ENCODE measurements at regions of chr4 and their contacts with region 1.

Region 1: GRCh38 chr4:143558823-143559756 is 45.6 kb downstream of the SMARCA5 start:
- DNase-seq: peak; percentile 81
- ATAC-seq: peak; percentile 85
- H3K4me3 ChIP-seq: peak overlapping the region; percentile 57 to 75 (median 65)
- H3K4me3 Mint-ChIP-seq: peak overlapping the region; percentile 89
- H3K27ac ChIP-seq: peak overlapping the region; percentile 65 to 75
- H3K27ac Mint-ChIP-seq: peak overlapping the region; percentile 88
- H3K4me1 ChIP-seq: peaks cover 7 to 20% of the 10 kb centered on the region in 2 donors
- H3K4me1 Mint-ChIP-seq: peaks cover 26% of the 10 kb centered on the region
- H3K27me3 ChIP-seq: no peaks in the 10 kb centered on the region
- H3K27me3 Mint-ChIP-seq: no peaks in the 10 kb centered on the region
- CTCF ChIP-seq: peak; percentile 65

Region 2: GRCh38 chr4:143195581-143195980 is 363.5 kb before region 1 on chr4:
- CTCF ChIA-PET with region 1: no interaction called
- POLR2A ChIA-PET with region 1: no interaction called
- intact Hi-C with region 1: no loop called
- DNase-seq: no peak
- ATAC-seq: no peak
- H3K4me3 ChIP-seq: no peak overlapping the region
- H3K4me3 Mint-ChIP-seq: no peak overlapping the region
- H3K27ac ChIP-seq: no peak overlapping the region
- H3K27ac Mint-ChIP-seq: no peak overlapping the region
- H3K4me1 ChIP-seq: no peaks in the 10 kb centered on the region
- H3K4me1 Mint-ChIP-seq: peaks cover 10% of the 10 kb centered on the region
- H3K27me3 ChIP-seq: no peaks in the 10 kb centered on the region
- H3K27me3 Mint-ChIP-seq: no peaks in the 10 kb centered on the region
- CTCF ChIP-seq: no peak

Region 3: GRCh38 chr4:143513306-143514168 is 45.6 kb before region 1 on chr4 and contains the start of gene SMARCA5:
- CTCF ChIA-PET with region 1: interaction called, 10 read pairs
- POLR2A ChIA-PET with region 1: interaction called, 3 read pairs
- intact Hi-C with region 1: loop called (anchors 1 kb)
- DNase-seq: peak; percentile 99
- ATAC-seq: peak; percentile 88
- H3K4me3 ChIP-seq: peak within 1 kb of the TSS; percentile 81 to 97 (median 93)
- H3K4me3 Mint-ChIP-seq: peak within 1 kb of the TSS; percentile 100
- H3K27ac ChIP-seq: peak within 1 kb of the TSS; percentile 94 to 99
- H3K27ac Mint-ChIP-seq: peak within 1 kb of the TSS; percentile 100
- H3K4me1 ChIP-seq: peaks cover 28 to 29% of the 10 kb centered on the region in 2 donors
- H3K4me1 Mint-ChIP-seq: peaks cover 39% of the 10 kb centered on the region
- H3K27me3 ChIP-seq: no peaks in the 10 kb centered on the region
- H3K27me3 Mint-ChIP-seq: peaks cover 8% of the 10 kb centered on the region
- CTCF ChIP-seq: no peak
- total RNA-seq, gene SMARCA5: 48.7 and 53.1 TPM in 2 replicates

Region 4: GRCh38 chr4:143575331-143575730 is 16.2 kb after region 1 on chr4:
- CTCF ChIA-PET with region 1: interaction called, 11 read pairs
- POLR2A ChIA-PET with region 1: no interaction called
- intact Hi-C with region 1: no loop called
- DNase-seq: no peak
- ATAC-seq: no peak
- H3K4me3 ChIP-seq: no peak overlapping the region
- H3K4me3 Mint-ChIP-seq: no peak overlapping the region
- H3K27ac ChIP-seq: no peak overlapping the region
- H3K27ac Mint-ChIP-seq: no peak overlapping the region
- H3K4me1 ChIP-seq: no peaks in the 10 kb centered on the region
- H3K4me1 Mint-ChIP-seq: no peaks in the 10 kb centered on the region
- H3K27me3 ChIP-seq: no peaks in the 10 kb centered on the region
- H3K27me3 Mint-ChIP-seq: no peaks in the 10 kb centered on the region
- CTCF ChIP-seq: no peak

Region 5: GRCh38 chr4:145260091-145260490 is 1701.0 kb after region 1 on chr4:
- CTCF ChIA-PET with region 1: no interaction called
- POLR2A ChIA-PET with region 1: no interaction called
- intact Hi-C with region 1: no loop called
- DNase-seq: no peak
- ATAC-seq: no peak
- H3K4me3 ChIP-seq: no peak overlapping the region
- H3K4me3 Mint-ChIP-seq: no peak overlapping the region
- H3K27ac ChIP-seq: no peak overlapping the region
- H3K27ac Mint-ChIP-seq: no peak overlapping the region
- H3K4me1 ChIP-seq: no peaks in the 10 kb centered on the region
- H3K4me1 Mint-ChIP-seq: no peaks in the 10 kb centered on the region
- H3K27me3 ChIP-seq: no peaks in the 10 kb centered on the region
- H3K27me3 Mint-ChIP-seq: peaks cover 7% of the 10 kb centered on the region
- CTCF ChIP-seq: no peak

Measured in B cell (primary cell).